GM10248 (cell line): ENCODE measurements at regions of chr1 and their contacts with region 1.

Region 1: DNA sequence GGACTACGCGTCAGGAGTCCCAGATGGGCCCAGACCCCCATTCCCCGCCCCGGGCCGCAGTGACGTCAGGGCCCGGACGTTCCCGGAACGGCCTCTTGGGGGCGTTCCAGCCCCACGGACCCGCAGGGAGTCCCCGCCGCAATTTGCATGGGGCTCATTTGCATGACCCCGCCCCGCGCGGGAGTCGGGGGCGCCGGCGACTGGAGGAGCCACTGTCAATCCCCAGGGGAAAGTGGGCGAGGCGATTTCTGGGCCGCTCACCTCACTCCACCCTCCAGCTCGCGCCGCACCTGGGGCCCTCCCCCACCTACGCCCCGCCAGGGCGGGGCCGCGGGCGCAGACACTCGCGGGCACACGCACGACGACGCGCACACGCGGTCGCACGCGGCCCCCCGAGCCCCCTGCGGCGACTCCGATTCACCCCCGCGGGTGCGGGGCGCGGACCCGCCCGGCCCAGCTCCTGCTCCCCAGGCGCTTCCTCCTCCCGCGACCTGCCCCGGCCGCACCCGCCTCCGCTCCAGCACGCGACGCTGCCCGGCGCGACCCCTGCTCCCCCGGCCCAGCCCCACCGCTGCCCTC is 13.2 kb downstream of the AGRN start:
- DNase-seq: peak; percentile 97
- CTCF ChIP-seq: peak; percentile 90

Region 2: GRCh38 chr1:1013105-1013921 is 19.8 kb before region 1 on chr1 and contains the start of gene ISG15:
- CTCF ChIA-PET with region 1: interaction called, 26 read pairs
- POLR2A ChIA-PET with region 1: no interaction called
- DNase-seq: peak; percentile 83
- CTCF ChIP-seq: no peak

Region 3: DNA sequence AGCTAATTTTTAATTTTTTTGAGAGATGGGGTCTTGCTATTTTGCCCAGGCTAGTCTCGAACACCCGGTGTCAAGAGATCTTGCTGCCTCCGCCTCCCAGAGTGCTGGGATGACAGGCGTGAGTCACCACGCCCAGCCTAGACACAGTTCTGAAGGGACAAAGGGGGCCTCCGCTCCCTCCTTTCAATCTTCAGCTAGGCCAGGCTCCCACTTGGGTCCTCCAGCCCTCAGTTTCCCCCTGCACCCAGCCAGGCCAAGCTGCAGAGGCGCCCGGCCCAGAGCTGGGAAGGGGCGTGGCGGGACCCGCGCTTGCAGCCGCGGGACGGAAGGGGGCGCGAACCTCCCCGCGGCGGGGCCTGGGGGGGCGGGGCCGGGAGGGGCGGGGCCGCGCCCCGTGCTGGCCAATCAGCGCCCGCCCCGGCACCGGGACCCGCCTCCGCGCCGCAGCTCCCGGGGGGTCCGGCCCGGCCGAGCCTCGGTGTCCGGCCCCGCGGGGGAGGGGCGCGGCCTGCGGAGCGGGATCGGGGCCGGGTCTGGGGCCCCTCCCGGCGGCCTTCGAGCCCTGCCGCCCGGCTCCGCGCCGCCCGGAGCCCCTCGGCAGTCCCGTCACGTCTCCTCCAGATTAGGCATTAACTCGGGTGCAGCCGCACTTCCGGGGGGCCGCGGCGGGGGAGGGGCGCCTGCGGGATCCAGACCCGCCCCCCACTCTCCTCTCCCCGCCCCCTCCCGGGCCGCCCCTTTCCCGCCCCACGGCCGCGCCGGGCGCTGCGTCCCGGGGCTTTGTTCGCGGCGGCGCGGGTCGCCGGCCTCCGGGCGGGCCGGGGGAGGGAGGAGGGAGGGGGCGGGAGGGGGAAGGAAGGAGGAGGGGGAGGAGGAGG is 13.7 kb before region 1 on chr1:
- CTCF ChIA-PET with region 1: interaction called, 26 read pairs
- POLR2A ChIA-PET with region 1: no interaction called
- DNase-seq: peak; percentile 95
- CTCF ChIP-seq: peak; percentile 73

Region 4: GRCh38 chr1:1291548-1292441 is 258.7 kb after region 1 on chr1:
- CTCF ChIA-PET with region 1: interaction called, 11 read pairs
- POLR2A ChIA-PET with region 1: no interaction called
- DNase-seq: peak; percentile 81
- CTCF ChIP-seq: peak; percentile 81